Activated CD4-positive, alpha-beta memory T cell treated with anti-CD3 and anti-CD28 coated beads for 36 hours (primary cell): ENCODE measurements at regions of chr16 and their contacts with region 1.

Region 1: GRCh38 chr16:27461483-27462171 is 59.7 kb downstream of the IL21R start:
- DNase-seq: no peak
- H3K4me3 Mint-ChIP-seq: no peak overlapping the region
- H3K27ac Mint-ChIP-seq: no peak overlapping the region
- H3K4me1 Mint-ChIP-seq: peaks cover 41% of the 10 kb centered on the region
- H3K27me3 Mint-ChIP-seq: no peaks in the 10 kb centered on the region

Region 2: DNA sequence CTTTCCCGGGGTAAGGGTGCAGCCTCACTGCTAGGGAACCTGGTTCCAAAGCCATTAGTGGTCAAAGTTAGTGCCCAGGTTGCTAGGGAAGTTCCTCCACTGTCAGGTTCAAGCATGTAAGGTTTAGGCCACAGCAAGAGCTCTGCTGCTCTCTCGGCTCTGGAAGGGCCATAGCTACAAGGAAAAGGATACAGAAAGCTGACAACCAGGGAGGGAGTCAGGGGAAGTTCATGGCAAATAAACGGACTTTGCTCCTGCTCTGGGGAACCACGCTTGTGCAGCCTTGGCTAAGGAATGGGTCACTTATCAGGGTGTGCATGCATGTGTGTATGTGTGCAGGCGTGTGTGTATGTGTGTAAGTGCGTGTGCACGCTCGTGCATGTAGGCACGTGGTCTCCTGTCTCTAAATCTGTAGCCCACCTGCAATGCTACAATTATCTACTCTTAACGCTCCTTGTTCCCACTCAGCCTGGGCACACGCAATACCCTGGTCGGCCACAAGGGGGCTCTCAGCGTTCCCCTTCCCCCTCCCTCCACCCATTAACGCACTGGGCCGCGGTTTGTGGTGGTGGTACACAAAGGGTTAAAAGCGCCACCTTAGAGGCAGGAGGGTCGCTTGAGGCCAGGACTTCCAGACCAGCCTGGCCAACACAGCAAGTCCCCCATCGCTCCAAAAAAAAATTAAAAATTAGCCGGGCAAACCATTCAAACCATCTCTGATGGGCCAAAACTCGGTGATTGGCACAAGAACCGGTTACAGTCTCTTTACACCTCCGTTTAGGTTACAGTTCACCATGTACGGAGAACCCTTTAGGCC is 306.7 kb before region 1 on chr16:
- CTCF ChIA-PET with region 1: interaction called, 5 read pairs
- POLR2A ChIA-PET with region 1: no interaction called
- intact Hi-C with region 1: loop called (anchors 1 kb)
- DNase-seq: peak; percentile 78
- H3K4me3 Mint-ChIP-seq: no peak overlapping the region
- H3K27ac Mint-ChIP-seq: no peak overlapping the region
- H3K4me1 Mint-ChIP-seq: peaks cover 6% of the 10 kb centered on the region
- H3K27me3 Mint-ChIP-seq: no peaks in the 10 kb centered on the region

Region 3: GRCh38 chr16:27522173-27522707 is 60.6 kb after region 1 on chr16:
- CTCF ChIA-PET with region 1: no interaction called
- POLR2A ChIA-PET with region 1: no interaction called
- intact Hi-C with region 1: no loop called
- DNase-seq: no peak
- H3K4me3 Mint-ChIP-seq: no peak overlapping the region
- H3K27ac Mint-ChIP-seq: no peak overlapping the region
- H3K4me1 Mint-ChIP-seq: no peaks in the 10 kb centered on the region
- H3K27me3 Mint-ChIP-seq: no peaks in the 10 kb centered on the region